Dorsolateral prefrontal cortex (tissue), 120 donors: ENCODE measurements at regions of chr10 and their contacts with region 1.

Region 1: DNA sequence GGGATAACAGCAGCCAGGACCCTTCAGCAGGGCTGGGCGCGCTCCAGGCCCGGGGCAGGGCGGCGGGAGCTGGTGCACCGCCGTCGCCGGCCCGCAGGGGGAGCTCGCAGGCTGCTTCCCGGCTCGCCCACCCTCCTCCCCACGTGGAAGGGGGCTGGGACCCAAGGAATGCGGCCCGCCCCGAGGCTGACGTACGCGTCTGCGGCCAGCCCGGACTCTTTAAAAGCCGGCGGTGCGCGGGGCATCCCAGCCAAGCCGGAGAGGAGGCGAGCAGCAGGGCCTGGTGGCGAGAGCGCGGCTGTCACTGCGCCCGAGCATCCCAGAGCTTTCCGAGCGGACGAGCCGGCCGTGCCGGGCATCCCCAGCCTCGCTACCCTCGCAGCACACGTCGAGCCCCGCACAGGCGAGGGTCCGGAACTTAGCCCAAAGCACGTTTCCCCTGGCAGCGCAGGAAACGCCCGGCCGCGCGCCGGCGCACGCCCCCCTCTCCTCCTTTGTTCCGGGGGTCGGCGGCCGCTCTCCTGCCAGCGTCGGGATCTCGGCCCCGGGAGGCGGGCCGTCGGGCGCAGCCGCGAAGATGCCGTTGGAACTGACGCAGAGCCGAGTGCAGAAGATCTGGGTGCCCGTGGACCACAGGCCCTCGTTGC is at the start of gene PFKFB3:
- DNase-seq: peak; percentile 82 to 98 (median 97)
- H3K4me3 ChIP-seq: peak within 1 kb of the TSS; percentile 58 to 99 (median 85)
- H3K27ac ChIP-seq: peak within 1 kb of the TSS; percentile 66 to 99 (median 95)
- H3K27me3 ChIP-seq: no peaks in the 10 kb centered on the region
- CTCF ChIP-seq: peak; percentile 93 to 100 (median 98)
- total RNA-seq, gene PFKFB3: 82.4 to 323 (median 122) TPM

Region 2: DNA sequence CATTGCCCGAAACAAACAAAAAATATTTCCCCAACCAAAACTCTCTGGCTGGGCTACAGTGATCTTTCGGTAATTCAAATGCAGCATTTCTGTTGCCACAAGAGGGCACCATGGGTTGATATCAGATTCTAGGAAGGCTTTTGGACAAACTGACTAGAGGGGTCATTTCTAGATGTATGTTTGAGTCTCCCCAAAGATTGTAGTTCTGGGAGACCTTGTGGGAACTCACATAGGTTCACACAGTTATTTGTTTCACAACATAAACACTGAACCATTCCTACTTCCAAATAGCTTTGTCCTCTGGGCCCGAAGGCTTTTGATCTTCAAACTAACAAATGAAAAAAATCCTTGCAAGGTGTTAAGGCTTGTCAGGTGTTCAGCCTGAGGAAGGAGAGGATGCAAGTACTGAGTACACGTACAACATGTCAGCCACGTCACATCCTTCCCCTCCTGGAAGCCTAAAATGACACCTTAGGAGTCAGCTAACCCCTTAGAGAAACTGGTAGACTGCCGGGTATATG is 188.5 kb before region 1 on chr10:
- intact Hi-C with region 1: loop called in 1 of 2 experiments (anchors 10 kb)
- DNase-seq: peak in 3 of 10 donors; percentile 11 to 68 (median 50)
- H3K4me3 ChIP-seq: peak overlapping the region in 1 of 59 donors; percentile 5
- H3K27ac ChIP-seq: peak overlapping the region in 1 of 59 donors; percentile 18
- H3K27me3 ChIP-seq: no peaks in the 10 kb centered on the region
- CTCF ChIP-seq: peak; percentile 64 to 87 (median 77)

Region 3: GRCh38 chr10:6033954-6034353 is 168.9 kb before region 1 on chr10:
- intact Hi-C with region 1: no loop called
- DNase-seq: no peak
- H3K4me3 ChIP-seq: no peak overlapping the region
- H3K27ac ChIP-seq: no peak overlapping the region
- H3K27me3 ChIP-seq: no peaks in the 10 kb centered on the region
- CTCF ChIP-seq: no peak

Region 4: GRCh38 chr10:6108603-6109443 is 94.0 kb before region 1 on chr10:
- intact Hi-C with region 1: loop called (anchors 1 to 5 kb)
- DNase-seq: no peak
- H3K4me3 ChIP-seq: no peak overlapping the region
- H3K27ac ChIP-seq: peak overlapping the region in 27 of 59 donors; percentile 1 to 76 (median 36)
- H3K27me3 ChIP-seq: no peaks in the 10 kb centered on the region
- CTCF ChIP-seq: peak; percentile 68 to 92 (median 85)

Region 5: DNA sequence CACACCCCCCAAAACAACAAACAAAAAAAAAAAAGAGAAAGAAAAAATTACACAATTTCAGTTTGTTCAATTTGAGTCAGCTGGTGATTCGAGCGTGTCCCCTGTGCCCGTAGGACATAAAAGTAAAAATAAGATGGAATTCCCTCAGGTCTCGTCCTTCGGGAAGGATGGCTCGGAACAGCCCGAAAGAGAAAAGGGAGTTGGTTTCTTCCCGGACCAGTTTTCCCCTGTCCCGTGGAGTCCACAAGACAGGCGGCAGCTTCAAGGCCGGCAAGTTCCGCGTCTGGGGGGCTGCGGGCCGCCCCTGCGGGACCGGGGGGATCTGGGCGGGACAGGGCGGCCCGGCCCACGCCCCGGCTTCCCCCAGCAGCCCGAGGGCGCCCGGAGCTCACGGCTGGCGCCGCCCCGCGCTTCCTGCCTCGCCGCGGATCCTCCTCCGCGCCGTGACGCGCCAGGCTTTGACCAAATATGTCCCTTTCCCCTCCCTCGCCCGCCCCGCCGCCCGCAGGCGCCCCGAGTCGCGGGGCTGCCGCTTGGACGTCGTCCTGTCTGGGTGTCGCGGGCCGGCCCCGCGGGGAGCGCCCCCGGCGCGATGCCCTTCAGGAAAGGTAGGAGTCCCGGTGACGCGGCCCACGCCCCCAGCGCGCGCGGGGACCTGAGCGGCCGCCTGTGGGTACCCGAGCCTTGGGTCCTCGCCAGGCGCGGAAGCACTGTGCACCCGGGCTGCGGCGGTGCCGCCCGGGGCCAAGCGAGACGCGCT is 58.2 kb before region 1 on chr10:
- intact Hi-C with region 1: loop called (anchors 5 to 10 kb)
- DNase-seq: peak; percentile 70 to 94 (median 86)
- H3K4me3 ChIP-seq: peak overlapping the region; percentile 54 to 94 (median 84)
- H3K27ac ChIP-seq: peak overlapping the region in 57 of 59 donors; percentile 23 to 94 (median 83)
- H3K27me3 ChIP-seq: no peaks in the 10 kb centered on the region
- CTCF ChIP-seq: peak in 45 of 56 donors; percentile 12 to 75 (median 47)

Region 6: DNA sequence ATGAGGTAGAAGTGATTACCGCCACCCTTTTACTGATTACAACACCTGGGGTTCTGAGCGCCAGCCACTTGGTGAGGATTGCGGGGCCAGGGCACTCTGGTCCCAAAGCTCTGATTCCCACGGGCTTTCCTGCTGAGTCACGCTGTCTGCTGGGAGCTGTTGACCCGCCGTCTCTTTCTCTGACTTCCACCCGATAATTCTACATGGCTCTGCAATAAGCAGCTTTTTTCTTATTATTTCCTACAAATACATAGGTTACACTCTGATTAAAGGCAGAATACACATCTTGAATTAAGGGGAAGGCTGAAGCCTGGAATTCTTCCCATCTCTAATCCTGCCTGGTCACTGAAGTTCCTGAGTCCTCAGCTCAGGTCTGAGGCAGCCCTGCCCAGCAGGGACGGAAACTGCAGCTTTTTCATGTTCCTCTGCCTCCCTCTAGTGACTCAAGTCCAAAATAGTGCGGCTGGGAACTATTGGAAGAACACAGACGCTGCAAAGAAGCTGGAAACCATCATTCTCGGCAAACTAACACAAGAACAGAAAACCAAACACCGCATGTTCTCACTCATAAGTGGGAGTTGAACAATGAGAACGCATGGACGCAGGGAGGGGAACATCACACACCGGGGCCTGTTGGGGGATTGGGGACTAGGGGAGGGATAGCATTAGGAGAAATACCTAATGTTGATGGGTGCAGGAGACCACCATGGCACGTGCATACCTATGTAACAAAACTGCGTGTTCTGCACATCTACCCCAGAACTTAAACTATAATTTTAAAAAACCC is 198.9 kb after region 1 on chr10:
- intact Hi-C with region 1: loop called (anchors 1 kb)
- DNase-seq: peak; percentile 43 to 90 (median 80)
- H3K4me3 ChIP-seq: peak overlapping the region; percentile 5 to 70 (median 49)
- H3K27ac ChIP-seq: peak overlapping the region in 56 of 59 donors; percentile 11 to 85 (median 73)
- H3K27me3 ChIP-seq: no peaks in the 10 kb centered on the region
- CTCF ChIP-seq: peak; percentile 44 to 91 (median 83)